HEK293 (cell line): ENCODE measurements at regions of chr16 and their contacts with region 1.

Region 1: GRCh38 chr16:11797166-11797956 is at the start of gene ZC3H7A:
- H3K4me3 ChIP-seq: peak within 1 kb of the TSS; percentile 87
- H3K27ac ChIP-seq: peak within 1 kb of the TSS; percentile 93
- H3K4me1 ChIP-seq: peaks cover 21% of the 10 kb centered on the region
- CTCF ChIP-seq: 0 out of 2 replicates have a peak, but pooled peaks have one; percentile 29

Region 2: GRCh38 chr16:11742539-11743307 is 54.6 kb before region 1 on chr16 and contains the start of gene TXNDC11:
- CTCF ChIA-PET with region 1: interaction called, 5 read pairs
- POLR2A ChIA-PET with region 1: interaction called, 39 read pairs
- H3K4me3 ChIP-seq: peak within 1 kb of the TSS; percentile 91
- H3K27ac ChIP-seq: peak within 1 kb of the TSS; percentile 78
- H3K4me1 ChIP-seq: peaks cover 9% of the 10 kb centered on the region
- CTCF ChIP-seq: no peak

Region 3: GRCh38 chr16:11783319-11784037 is 13.9 kb before region 1 on chr16:
- CTCF ChIA-PET with region 1: interaction called, 11 read pairs
- POLR2A ChIA-PET with region 1: interaction called, 5 read pairs
- H3K4me3 ChIP-seq: no peak overlapping the region
- H3K27ac ChIP-seq: peak overlapping the region; percentile 37; the same call in 1 of the 2 replicates
- H3K4me1 ChIP-seq: peaks cover 18% of the 10 kb centered on the region; the same call in 1 of the 2 replicates
- CTCF ChIP-seq: no peak

Region 4: DNA sequence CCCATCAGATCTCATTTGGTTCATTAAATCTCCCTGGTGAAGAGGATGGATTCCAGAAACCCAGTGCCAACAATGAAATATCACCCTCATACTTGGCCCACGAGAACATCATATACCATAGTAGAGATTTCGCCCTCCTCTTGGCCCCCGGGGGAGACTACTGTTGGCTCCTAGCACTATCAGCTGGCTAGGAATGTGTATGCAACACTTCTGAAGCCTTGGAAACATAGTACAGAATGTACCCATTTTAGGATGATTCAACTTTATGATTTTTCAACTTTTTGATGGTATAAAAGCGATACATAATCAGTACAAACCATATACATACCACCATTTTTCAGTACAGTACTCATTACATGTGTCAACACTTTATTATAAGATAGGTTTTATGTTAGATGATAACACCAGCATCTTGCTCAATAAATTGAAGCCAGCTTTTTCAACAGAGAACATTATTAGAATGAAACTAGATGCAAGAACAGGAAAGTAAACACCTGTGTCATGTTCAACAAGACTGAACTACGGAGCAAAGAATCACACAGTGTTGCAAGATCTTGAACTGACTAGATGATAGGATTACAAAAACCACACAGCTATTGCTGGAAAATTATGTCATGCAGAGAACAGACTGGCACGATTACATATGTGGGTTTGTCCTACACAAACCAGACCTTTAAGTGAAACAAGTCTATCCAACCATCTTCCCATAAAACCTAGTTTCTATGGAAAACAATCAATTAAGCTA is 36.8 kb after region 1 on chr16:
- CTCF ChIA-PET with region 1: interaction called, 5 read pairs
- POLR2A ChIA-PET with region 1: interaction called, 16 read pairs
- H3K4me3 ChIP-seq: no peak overlapping the region
- H3K27ac ChIP-seq: no peak overlapping the region
- H3K4me1 ChIP-seq: peaks cover 12% of the 10 kb centered on the region
- CTCF ChIP-seq: no peak